ENCODE measurements at regions of chr5 and their contacts with region 1.

Region 1: DNA sequence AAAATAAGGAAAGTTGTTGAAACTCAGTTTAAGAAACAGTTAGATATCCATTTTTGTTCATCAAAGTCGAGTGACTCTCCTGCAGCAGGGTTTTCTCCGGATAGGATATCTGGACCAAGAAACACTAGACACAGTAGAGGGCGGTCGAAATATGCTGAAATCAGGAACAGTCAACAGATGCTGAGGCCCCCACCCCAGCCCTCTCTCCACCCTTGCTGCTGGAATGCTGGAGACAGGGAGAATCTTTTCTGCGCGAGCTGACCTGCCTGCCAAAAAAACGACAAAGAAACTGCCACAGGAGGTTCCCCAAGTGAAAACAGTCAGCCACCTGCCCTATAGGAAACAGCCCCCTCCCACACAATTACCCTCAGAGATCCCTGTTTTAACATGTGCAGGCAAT is 4.3 kb upstream of the IL13 start:
- DNase-seq: peak in 1 of 4 experiments; percentile 36
- ATAC-seq: peak; percentile 53; the same call in 2 of the 3 replicates
- H3K4me3 ChIP-seq: no peak overlapping the region
- H3K27ac ChIP-seq: no peak overlapping the region
- H3K4me1 ChIP-seq: peaks cover 16 to 18% of the 10 kb centered on the region in 2 experiments; a peak in 4 of 5 replicates
- H3K27me3 ChIP-seq: no peaks in the 10 kb centered on the region
- CTCF ChIP-seq: 0 out of 6 replicates have a peak, but pooled peaks of 1 of the 3 experiments have one; percentile 17
- EP300 ChIP-seq: no peak
- POLR2A ChIP-seq: no peak
- RAD21 ChIP-seq: peak in 1 of 2 experiments; percentile 31; a peak in 1 of 4 replicates

Region 2: DNA sequence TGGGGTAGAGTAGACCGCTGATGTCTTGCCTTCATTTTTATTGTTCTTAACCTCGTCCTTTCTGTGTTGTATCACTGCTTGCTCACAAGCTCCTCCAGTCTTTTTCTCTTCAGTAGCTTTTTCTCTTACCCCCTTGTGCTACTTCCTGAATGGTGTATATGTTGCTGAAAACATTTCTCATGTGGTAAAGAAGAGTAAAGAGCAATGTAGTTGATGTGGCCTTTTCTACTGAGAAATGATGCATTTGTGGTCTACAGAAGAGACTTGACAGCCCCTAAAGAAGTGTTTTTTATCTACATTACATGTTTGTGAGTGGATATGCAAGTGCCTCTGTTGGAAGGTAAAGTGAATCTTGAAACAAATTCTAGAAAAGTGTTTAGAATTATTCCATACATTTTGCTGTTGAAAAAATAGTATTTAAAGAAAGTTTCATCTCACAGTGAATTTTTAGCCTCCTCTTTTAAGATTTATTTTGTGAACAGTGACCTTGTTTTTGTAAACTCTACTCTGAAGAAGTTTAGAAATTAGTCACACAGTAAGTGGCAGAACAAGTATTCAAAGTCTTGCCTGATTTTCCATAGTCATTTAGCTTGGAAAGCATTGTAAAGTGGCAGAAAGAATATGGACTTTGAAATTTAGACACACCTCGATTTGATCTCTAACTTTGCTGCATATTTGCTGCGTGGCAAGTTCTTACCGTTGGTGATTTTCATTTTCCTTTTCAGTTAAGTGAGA is 1372.4 kb before region 1 on chr5:
- CTCF ChIA-PET with region 1: no interaction called
- POLR2A ChIA-PET with region 1: no interaction called
- in situ Hi-C with region 1: no loop called
- intact Hi-C with region 1: no loop called
- DNase-seq: no peak
- ATAC-seq: no peak
- H3K4me3 ChIP-seq: no peak overlapping the region
- H3K27ac ChIP-seq: no peak overlapping the region
- H3K4me1 ChIP-seq: no peaks in the 10 kb centered on the region
- H3K27me3 ChIP-seq: no peaks in the 10 kb centered on the region
- CTCF ChIP-seq: no peak
- EP300 ChIP-seq: no peak
- POLR2A ChIP-seq: no peak
- RAD21 ChIP-seq: no peak

Region 3: DNA sequence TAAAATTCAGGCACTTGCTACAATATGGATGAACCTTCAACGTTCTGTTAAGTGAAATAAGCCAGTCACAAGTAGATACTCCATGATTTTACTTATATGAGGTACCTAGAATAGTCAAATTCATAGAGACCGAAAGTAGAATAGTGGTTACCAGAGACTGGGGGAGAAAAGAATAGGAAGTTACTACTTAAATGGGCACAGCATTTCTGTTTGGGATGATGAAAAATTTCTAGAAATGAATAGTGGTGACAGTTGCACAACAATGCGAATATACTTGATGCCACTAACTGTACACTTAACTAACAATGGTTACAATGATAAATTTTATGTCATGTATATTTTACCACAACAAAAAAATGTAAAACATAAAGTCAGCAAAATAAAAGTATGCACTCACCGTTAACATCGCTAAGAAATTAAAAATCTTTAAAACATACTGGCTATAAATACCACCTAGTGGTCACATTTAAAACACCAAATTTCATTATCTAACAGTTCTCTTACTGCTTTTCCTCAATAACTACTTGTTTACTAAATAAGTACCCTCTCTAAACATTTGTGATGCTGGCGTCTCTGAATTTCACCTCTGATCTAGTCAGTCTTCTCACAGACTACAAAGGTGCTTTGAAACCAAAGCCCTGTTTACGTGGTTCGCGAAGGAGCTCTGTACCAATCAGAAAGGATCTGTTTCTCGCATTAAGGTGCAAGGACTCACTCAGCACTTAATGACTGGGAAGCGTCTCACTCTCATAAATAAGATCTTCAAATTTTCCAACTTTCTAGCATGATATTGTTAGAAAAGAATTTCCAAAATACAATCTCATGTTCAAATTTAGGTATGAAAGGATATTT is 61.0 kb after region 1 on chr5:
- CTCF ChIA-PET with region 1: no interaction called
- POLR2A ChIA-PET with region 1: no interaction called
- in situ Hi-C with region 1: no loop called
- intact Hi-C with region 1: loop called (anchors 5 kb)
- DNase-seq: peak in 3 of 4 experiments; percentile 6 to 22 (median 15)
- ATAC-seq: no peak; the same call in 2 of the 3 replicates
- H3K4me3 ChIP-seq: no peak overlapping the region
- H3K27ac ChIP-seq: no peak overlapping the region
- H3K4me1 ChIP-seq: no peaks in the 10 kb centered on the region
- H3K27me3 ChIP-seq: no peaks in the 10 kb centered on the region
- CTCF ChIP-seq: peak; percentile 13 to 55 (median 39); a peak in 4 of 6 replicates
- EP300 ChIP-seq: no peak
- POLR2A ChIP-seq: no peak
- RAD21 ChIP-seq: peak; percentile 37 to 70

Measured in K562 (cell line).